OCI-LY7 (cell line): ENCODE measurements at regions of chr3 and their contacts with region 1.

Region 1: GRCh38 chr3:33113772-33114621 is at the start of gene CRTAP:
- DNase-seq: peak; percentile 93
- H3K4me3 ChIP-seq: peak within 1 kb of the TSS; percentile 74
- H3K27ac ChIP-seq: peak within 1 kb of the TSS; percentile 89
- H3K4me1 ChIP-seq: peaks cover 31% of the 10 kb centered on the region
- CTCF ChIP-seq: no peak
- total RNA-seq, gene CRTAP: 11.8 and 19.2 TPM in 2 replicates

Region 2: GRCh38 chr3:33096093-33096868 is 17.7 kb before region 1 on chr3:
- CTCF ChIA-PET with region 1: no interaction called
- POLR2A ChIA-PET with region 1: interaction called, 5 read pairs
- intact Hi-C with region 1: loop called (anchors 1 kb)
- DNase-seq: peak; percentile 51
- H3K4me3 ChIP-seq: peak overlapping the region; percentile 84
- H3K27ac ChIP-seq: no peak overlapping the region
- H3K4me1 ChIP-seq: no peaks in the 10 kb centered on the region
- CTCF ChIP-seq: no peak

Region 3: GRCh38 chr3:33137691-33138090 is 23.7 kb after region 1 on chr3:
- CTCF ChIA-PET with region 1: no interaction called
- POLR2A ChIA-PET with region 1: no interaction called
- intact Hi-C with region 1: no loop called
- DNase-seq: no peak
- H3K4me3 ChIP-seq: no peak overlapping the region
- H3K27ac ChIP-seq: no peak overlapping the region
- H3K4me1 ChIP-seq: no peaks in the 10 kb centered on the region
- CTCF ChIP-seq: no peak

Region 4: GRCh38 chr3:33798411-33799201 is 684.6 kb after region 1 on chr3 and contains the start of gene PDCD6IP:
- CTCF ChIA-PET with region 1: no interaction called
- POLR2A ChIA-PET with region 1: no interaction called
- intact Hi-C with region 1: loop called (anchors 10 kb)
- DNase-seq: peak; percentile 92
- H3K4me3 ChIP-seq: peak within 1 kb of the TSS; percentile 84
- H3K27ac ChIP-seq: peak within 1 kb of the TSS; percentile 56
- H3K4me1 ChIP-seq: peaks cover 32% of the 10 kb centered on the region
- CTCF ChIP-seq: peak; percentile 34; the same call in 1 of the 2 replicates
- total RNA-seq, gene PDCD6IP: 75.5 and 126 TPM in 2 replicates